ENCODE measurements at regions of chr3 and their contacts with region 1.

Region 1: DNA sequence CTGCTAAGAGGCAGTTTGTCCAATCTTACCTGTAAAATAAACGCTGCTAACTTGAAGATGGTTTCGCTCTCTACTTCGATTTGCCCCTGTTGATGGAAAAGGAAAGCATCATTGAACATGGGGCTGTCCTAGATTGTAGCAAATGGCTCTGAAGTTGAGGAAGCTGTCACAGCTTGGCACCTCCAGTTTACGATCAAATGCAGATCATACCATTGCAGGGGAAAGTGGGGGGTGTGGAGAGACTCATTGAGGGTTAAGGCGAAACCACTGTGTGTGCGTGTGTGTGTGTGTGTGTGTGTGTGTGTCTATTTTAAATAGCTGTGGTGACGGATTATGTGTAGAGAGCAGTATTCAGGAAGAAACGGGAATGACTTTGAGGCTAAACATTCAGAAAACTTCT is 127.6 kb upstream of the LMOD3 start:
- DNase-seq: peak; percentile 35 to 83 (median 63)
- H3K4me3 ChIP-seq: peak overlapping the region in 1 of 2 donors; percentile 27
- H3K4me3 Mint-ChIP-seq: peak overlapping the region; percentile 2 to 85 (median 74)
- H3K27ac ChIP-seq: no peak overlapping the region
- H3K27ac Mint-ChIP-seq: peak overlapping the region in 5 of 7 donors; percentile 74 to 95 (median 88)
- H3K4me1 ChIP-seq: peaks cover 12% of the 10 kb centered on the region
- H3K4me1 Mint-ChIP-seq: peaks cover 11 to 19% (median 14%) of the 10 kb centered on the region in 4 donors
- H3K27me3 ChIP-seq: no peaks in the 10 kb centered on the region
- H3K27me3 Mint-ChIP-seq: no peaks in the 10 kb centered on the region

Region 2: GRCh38 chr3:69065318-69065964 is 184.6 kb before region 1 on chr3:
- CTCF ChIA-PET with region 1: no interaction called
- POLR2A ChIA-PET with region 1: no interaction called
- intact Hi-C with region 1: no loop called
- DNase-seq: peak in 4 of 5 donors; percentile 48 to 56 (median 52)
- H3K4me3 ChIP-seq: no peak overlapping the region
- H3K4me3 Mint-ChIP-seq: peak overlapping the region in 7 of 8 donors; percentile 6 to 83 (median 75)
- H3K27ac ChIP-seq: peak overlapping the region; percentile 27
- H3K27ac Mint-ChIP-seq: peak overlapping the region; percentile 41 to 94 (median 86)
- H3K4me1 ChIP-seq: peaks cover 43% of the 10 kb centered on the region
- H3K4me1 Mint-ChIP-seq: peaks cover 26 to 53% (median 36%) of the 10 kb centered on the region in 4 donors
- H3K27me3 ChIP-seq: no peaks in the 10 kb centered on the region
- H3K27me3 Mint-ChIP-seq: no peaks in the 10 kb centered on the region

Region 3: GRCh38 chr3:69200384-69201068 is 49.5 kb before region 1 on chr3:
- CTCF ChIA-PET with region 1: interaction called, 5 read pairs
- POLR2A ChIA-PET with region 1: interaction called, 39 read pairs
- intact Hi-C with region 1: loop called (anchors 1 kb)
- DNase-seq: peak; percentile 20 to 47 (median 27)
- H3K4me3 ChIP-seq: peak overlapping the region; percentile 82 to 94
- H3K4me3 Mint-ChIP-seq: peak overlapping the region; percentile 92 to 97 (median 96)
- H3K27ac ChIP-seq: peak overlapping the region; percentile 79
- H3K27ac Mint-ChIP-seq: peak overlapping the region; percentile 94 to 98 (median 97)
- H3K4me1 ChIP-seq: peaks cover 28% of the 10 kb centered on the region
- H3K4me1 Mint-ChIP-seq: peaks cover 29 to 64% (median 43%) of the 10 kb centered on the region in 4 donors
- H3K27me3 ChIP-seq: no peaks in the 10 kb centered on the region
- H3K27me3 Mint-ChIP-seq: no peaks in the 10 kb centered on the region

Region 4: DNA sequence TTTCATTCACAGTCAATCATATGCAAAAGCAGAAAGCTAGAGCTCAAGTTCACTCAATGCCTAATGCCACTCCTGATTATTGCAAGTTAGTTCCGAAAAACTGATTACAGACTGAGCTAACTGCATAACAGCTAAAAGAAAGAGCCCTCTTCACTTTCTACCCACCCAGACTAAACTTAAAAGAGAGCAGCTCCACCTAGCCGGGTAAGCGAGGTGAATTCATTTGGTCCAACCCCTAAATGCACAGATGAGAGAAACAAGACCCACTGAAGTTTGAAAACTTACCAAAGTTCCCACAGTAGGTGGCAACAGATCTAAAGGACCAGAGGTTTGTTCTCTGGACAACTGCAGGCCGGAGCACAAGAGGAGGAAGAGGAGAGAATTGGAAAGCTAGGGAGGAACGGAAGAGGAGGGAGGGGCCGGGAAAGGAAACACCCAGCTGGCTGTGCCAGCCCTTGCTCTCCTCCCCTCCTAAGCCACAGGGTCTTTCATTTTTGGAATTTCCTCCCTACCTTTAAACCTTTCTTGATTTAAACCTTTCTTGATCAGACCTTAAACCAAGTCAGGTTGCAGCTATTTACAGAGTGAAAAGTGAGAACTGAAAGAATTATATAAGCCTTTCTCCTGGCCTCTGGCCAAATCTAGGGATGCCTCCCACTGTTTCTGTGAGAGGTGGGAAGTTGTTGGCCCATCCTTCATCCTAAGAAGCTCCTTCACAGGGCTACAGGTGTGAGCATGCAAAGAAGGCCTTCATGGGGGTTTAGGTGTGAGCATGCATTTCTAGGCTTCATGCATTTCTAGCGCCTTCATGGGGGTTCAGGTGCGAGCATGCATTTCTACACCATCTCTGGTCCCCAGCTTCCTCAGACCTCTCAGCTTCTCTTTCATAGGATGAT is 13.0 kb before region 1 on chr3:
- CTCF ChIA-PET with region 1: interaction called, 17 read pairs
- POLR2A ChIA-PET with region 1: interaction called, 24 read pairs
- intact Hi-C with region 1: loop called (anchors 1 kb)
- DNase-seq: peak in 1 of 5 donors; percentile 16
- H3K4me3 ChIP-seq: no peak overlapping the region
- H3K4me3 Mint-ChIP-seq: peak overlapping the region; percentile 67 to 89 (median 84)
- H3K27ac ChIP-seq: no peak overlapping the region
- H3K27ac Mint-ChIP-seq: peak overlapping the region; percentile 50 to 95 (median 62)
- H3K4me1 ChIP-seq: peaks cover 31% of the 10 kb centered on the region
- H3K4me1 Mint-ChIP-seq: peaks cover 15 to 29% (median 21%) of the 10 kb centered on the region in 4 donors
- H3K27me3 ChIP-seq: no peaks in the 10 kb centered on the region
- H3K27me3 Mint-ChIP-seq: no peaks in the 10 kb centered on the region

Region 5: DNA sequence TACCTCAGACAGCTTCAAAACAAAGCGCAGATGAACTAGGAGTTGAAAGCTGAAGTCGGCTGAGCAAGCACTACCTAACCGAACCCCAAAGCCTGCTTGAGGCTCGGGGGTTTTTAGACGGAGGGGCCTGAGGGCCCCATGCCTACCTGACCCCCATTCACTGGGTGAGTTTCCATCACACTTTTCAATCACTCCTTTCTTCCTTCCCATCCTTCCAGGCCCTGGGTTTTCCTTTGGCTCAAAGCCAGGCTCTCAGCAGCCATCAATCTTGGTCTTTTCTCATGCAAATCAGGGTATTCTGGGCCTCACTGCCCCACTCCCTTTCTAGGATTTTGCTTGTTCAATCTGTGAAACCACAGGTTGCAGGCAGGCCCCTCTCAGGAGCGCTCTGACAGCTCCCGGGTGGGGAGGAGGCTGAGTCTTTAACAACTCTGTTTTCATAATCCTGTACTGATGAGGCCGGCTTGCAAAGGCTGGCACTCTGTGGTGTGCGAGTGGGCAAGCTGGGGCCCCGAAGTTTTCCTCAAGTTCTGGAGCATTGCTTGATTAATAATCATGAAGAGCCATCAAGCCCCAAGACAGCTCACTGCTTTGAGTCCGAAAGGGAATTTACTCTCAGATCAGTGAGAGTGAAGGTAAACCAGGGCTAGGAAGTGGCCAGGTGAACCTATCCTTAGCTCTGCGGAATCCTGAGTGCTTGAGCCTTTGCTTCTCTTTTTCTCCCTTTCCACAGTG is 38.3 kb after region 1 on chr3:
- CTCF ChIA-PET with region 1: no interaction called
- POLR2A ChIA-PET with region 1: no interaction called
- intact Hi-C with region 1: loop called (anchors 5 kb)
- DNase-seq: no peak
- H3K4me3 ChIP-seq: no peak overlapping the region
- H3K4me3 Mint-ChIP-seq: peak overlapping the region; percentile 21 to 81 (median 71)
- H3K27ac ChIP-seq: no peak overlapping the region
- H3K27ac Mint-ChIP-seq: peak overlapping the region in 6 of 7 donors; percentile 39 to 90 (median 76)
- H3K4me1 ChIP-seq: peaks cover 12% of the 10 kb centered on the region
- H3K4me1 Mint-ChIP-seq: peaks cover 8 to 24% (median 20%) of the 10 kb centered on the region in 4 donors
- H3K27me3 ChIP-seq: no peaks in the 10 kb centered on the region
- H3K27me3 Mint-ChIP-seq: no peaks in the 10 kb centered on the region